MCF 10A (cell line): ENCODE measurements at regions of chr1 and their contacts with region 1.

Region 1: DNA sequence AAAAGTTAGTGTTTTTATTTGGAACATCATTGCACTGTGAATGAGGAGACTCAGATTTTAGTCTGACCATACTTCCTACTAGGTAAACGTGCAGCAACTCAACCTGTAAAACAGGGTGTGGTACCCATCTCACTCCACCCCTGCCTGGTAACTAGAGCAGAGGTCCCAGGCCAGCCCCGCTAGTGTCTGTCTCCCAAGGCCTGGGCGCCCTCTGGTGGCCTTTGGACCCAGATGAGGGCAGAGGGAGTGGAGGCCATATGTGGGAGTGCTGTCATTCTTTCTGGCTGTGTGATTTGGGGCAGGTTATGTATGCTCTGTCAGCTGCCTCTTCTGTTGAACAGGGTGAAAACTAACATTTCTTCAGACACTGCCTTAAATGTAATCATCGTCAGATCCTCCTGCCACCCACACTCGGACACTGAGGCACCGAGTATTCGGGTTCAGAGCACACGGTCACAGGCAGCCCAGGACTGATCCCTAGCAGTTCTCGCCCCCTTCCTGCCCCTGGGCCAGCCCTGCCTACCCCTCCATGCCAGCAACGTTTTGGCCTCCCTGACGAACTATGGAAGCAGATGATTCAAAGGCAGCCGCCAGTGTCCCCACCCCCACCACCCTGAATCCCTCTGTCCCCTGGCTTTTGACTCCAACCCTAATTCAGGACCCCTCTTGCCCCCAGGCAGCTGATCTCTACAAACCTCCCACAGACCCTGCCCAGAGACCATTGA is 76.0 kb downstream of the CD247 start:
- DNase-seq: peak; percentile 94
- H3K4me3 Mint-ChIP-seq: no peak overlapping the region
- H3K27ac Mint-ChIP-seq: no peak overlapping the region
- H3K4me1 Mint-ChIP-seq: peaks cover 6% of the 10 kb centered on the region
- H3K27me3 Mint-ChIP-seq: peaks cover 18% of the 10 kb centered on the region
- CTCF ChIP-seq: peak; percentile 98

Region 2: GRCh38 chr1:167128261-167129227 is 313.7 kb before region 1 on chr1:
- CTCF ChIA-PET with region 1: interaction called, 4 read pairs
- POLR2A ChIA-PET with region 1: no interaction called
- intact Hi-C with region 1: loop called (anchors 5 kb)
- DNase-seq: peak; percentile 31
- H3K4me3 Mint-ChIP-seq: no peak overlapping the region
- H3K27ac Mint-ChIP-seq: no peak overlapping the region
- H3K4me1 Mint-ChIP-seq: no peaks in the 10 kb centered on the region
- H3K27me3 Mint-ChIP-seq: peaks cover 33% of the 10 kb centered on the region
- CTCF ChIP-seq: peak; percentile 43

Region 3: DNA sequence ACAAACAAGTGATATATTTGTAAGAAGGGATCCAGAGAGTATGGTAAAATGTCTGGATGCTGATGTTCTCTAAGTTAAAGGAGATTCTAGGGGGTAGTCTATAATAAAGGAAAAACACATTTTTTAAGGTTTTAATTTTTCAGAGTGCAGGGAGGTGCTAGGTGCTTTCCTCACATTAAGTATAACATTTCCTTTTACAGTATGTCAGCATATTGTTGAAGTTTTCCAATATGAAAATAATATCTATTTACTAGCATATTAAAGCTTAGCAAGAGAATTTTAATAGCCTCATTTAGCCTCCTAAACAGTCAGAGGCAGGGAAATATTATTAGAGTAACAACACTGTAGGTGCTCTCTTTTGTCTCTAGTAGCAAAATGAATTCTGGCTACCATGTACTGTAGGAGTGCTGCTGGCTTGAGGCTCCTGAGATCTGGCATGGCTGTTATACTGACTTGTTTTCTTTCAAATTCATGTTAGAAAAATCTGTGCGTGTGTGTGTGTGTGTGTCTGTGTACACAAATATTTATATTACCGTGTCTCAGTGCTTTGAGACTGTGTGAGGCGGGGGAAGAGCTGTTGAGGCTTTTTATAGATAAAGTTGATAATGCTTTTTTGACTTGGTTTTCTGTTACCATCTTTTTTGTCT is 150.6 kb before region 1 on chr1:
- CTCF ChIA-PET with region 1: interaction called, 19 read pairs
- POLR2A ChIA-PET with region 1: no interaction called
- intact Hi-C with region 1: no loop called
- DNase-seq: no peak
- H3K4me3 Mint-ChIP-seq: no peak overlapping the region
- H3K27ac Mint-ChIP-seq: no peak overlapping the region
- H3K4me1 Mint-ChIP-seq: peaks cover 13% of the 10 kb centered on the region
- H3K27me3 Mint-ChIP-seq: no peaks in the 10 kb centered on the region
- CTCF ChIP-seq: no peak

Region 4: DNA sequence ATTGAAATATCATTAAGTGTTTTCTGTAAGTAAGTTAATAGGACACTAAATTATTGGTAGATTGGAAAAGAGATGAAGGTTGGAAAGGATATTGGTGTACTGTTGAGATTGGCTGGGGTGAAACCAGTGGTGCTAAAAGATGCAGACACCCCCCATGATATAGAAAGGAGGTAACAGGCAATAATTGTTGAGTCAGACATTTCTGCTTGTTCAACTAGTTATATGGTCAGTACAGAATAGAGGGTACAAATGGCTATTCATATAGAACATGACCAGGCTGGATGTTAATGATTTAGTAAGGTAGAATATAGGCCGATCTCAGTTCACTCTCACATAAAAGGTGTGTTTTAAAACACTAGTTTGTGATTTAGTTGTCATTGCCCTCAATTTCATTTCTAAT is 117.1 kb before region 1 on chr1:
- CTCF ChIA-PET with region 1: no interaction called
- POLR2A ChIA-PET with region 1: no interaction called
- intact Hi-C with region 1: no loop called
- DNase-seq: no peak
- H3K4me3 Mint-ChIP-seq: no peak overlapping the region
- H3K27ac Mint-ChIP-seq: no peak overlapping the region
- H3K4me1 Mint-ChIP-seq: no peaks in the 10 kb centered on the region
- H3K27me3 Mint-ChIP-seq: no peaks in the 10 kb centered on the region
- CTCF ChIP-seq: no peak

Region 5: GRCh38 chr1:167409183-167409582 is 33.1 kb before region 1 on chr1:
- CTCF ChIA-PET with region 1: interaction called, 54 read pairs
- POLR2A ChIA-PET with region 1: no interaction called
- intact Hi-C with region 1: no loop called
- DNase-seq: peak; percentile 48
- H3K4me3 Mint-ChIP-seq: no peak overlapping the region
- H3K27ac Mint-ChIP-seq: no peak overlapping the region
- H3K4me1 Mint-ChIP-seq: peaks cover 6% of the 10 kb centered on the region
- H3K27me3 Mint-ChIP-seq: no peaks in the 10 kb centered on the region
- CTCF ChIP-seq: peak; percentile 19

Region 6: GRCh38 chr1:167454894-167455785 is 12.9 kb after region 1 on chr1:
- CTCF ChIA-PET with region 1: interaction called, 44 read pairs
- POLR2A ChIA-PET with region 1: interaction called, 5 read pairs
- intact Hi-C with region 1: no loop called
- DNase-seq: peak; percentile 57
- H3K4me3 Mint-ChIP-seq: peak overlapping the region; percentile 71
- H3K27ac Mint-ChIP-seq: no peak overlapping the region
- H3K4me1 Mint-ChIP-seq: no peaks in the 10 kb centered on the region
- H3K27me3 Mint-ChIP-seq: no peaks in the 10 kb centered on the region
- CTCF ChIP-seq: no peak